ENCODE measurements at regions of chr17 and their contacts with region 1.

Region 1: GRCh38 chr17:39621523-39622379 is 5.0 kb upstream of the PPP1R1B start:
- DNase-seq: peak; percentile 92
- ATAC-seq: peak; percentile 78
- H3K4me3 Mint-ChIP-seq: peak overlapping the region; percentile 65
- H3K27ac Mint-ChIP-seq: peak overlapping the region; percentile 78
- H3K4me1 Mint-ChIP-seq: peaks cover 18% of the 10 kb centered on the region
- H3K27me3 Mint-ChIP-seq: peaks cover 14% of the 10 kb centered on the region
- CTCF ChIP-seq: peak; percentile 100

Region 2: DNA sequence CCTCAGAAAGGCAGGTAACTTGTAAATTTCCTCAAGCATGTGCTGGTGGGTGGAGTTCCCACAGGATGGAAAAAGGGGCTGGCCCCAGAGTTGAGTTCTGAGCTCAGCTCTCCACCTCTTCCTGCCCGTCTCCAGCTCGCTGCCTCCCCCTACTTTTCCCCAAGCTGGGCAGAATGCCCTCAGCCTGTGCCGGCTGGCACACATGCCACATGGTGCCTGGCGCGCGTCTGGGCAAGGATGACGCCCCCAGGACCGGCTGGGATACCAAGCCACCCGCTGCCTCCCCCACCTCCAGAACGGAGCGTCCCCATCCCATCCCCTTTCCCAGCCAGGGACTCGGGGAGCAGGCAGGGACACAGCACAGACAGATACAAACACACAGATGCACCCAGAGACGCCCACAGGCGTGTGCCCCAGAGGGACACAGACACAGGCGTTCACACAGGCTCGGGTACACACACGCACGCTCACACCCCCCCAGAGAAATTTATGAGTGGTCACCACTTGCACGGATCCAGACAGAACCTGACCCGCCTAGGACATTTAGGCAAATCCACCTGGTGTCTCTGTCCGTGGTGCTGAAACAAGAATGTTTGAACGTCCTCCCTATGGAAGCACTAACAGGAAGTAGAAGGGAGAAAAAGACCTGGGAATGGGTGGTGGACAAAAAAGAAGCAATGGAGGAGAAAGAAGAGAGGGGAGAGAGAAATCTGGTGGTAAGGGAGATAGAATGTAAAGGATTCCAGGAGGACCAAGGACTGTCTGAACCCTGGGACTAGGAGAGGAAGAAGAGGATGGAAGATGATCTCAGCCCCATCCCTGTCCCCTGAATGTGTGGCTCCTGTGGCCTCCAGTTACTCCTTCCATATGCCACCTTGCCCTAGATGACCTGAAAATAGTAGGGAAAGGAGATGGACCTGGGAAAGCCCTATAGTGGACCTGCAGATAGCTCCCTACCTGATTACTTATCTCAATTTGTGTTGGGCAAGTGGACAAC is 29.5 kb before region 1 on chr17:
- CTCF ChIA-PET with region 1: interaction called, 17 read pairs
- POLR2A ChIA-PET with region 1: interaction called, 3 read pairs
- intact Hi-C with region 1: no loop called
- DNase-seq: peak; percentile 52
- ATAC-seq: no peak
- H3K4me3 Mint-ChIP-seq: no peak overlapping the region
- H3K27ac Mint-ChIP-seq: no peak overlapping the region
- H3K4me1 Mint-ChIP-seq: peaks cover 10% of the 10 kb centered on the region
- H3K27me3 Mint-ChIP-seq: peaks cover 44% of the 10 kb centered on the region
- CTCF ChIP-seq: no peak

Region 3: DNA sequence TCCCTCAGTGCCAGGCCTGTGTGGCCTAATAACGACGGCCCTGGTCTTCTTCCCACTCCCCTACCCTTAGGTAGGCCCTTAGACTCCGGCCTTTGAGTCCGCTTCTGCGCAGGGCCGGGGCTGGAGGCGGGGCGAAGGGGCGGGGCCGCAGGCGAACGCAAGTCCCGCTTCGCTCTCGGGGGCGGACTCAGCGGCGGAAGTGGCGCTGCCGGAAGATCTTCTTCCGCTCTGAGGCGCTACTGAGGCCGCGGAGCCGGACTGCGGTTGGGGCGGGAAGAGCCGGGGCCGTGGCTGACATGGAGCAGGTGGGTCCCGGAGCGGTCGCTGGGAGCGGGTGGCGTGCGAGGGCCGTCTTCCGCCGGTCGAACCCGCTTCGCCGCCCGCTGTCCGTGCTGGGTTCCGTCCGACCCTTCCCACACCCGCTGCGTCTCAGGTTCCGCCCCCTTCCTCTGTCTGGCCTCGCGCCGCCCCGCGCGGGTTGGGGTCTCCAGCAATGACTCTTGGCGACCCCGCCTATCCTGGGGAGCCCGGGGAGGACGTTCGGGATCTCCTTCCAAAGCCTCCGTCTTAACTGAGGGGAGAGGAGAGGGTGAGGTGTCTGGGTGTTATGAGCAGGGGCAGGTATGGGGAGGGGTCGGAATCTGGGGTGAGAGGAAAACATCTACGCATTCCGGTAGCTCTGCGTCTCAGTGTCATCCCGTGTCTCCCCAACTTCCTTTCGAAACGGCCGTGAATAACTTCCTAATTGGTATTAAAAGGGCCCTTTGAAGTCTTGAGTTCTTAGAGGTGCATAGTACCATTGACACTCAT is 15.4 kb after region 1 on chr17 and contains the start of gene STARD3:
- CTCF ChIA-PET with region 1: interaction called, 224 read pairs
- POLR2A ChIA-PET with region 1: interaction called, 5 read pairs
- intact Hi-C with region 1: no loop called
- DNase-seq: peak; percentile 95
- ATAC-seq: peak; percentile 93
- H3K4me3 Mint-ChIP-seq: peak within 1 kb of the TSS; percentile 90
- H3K27ac Mint-ChIP-seq: peak within 1 kb of the TSS; percentile 87
- H3K4me1 Mint-ChIP-seq: peaks cover 46% of the 10 kb centered on the region
- H3K27me3 Mint-ChIP-seq: no peaks in the 10 kb centered on the region
- CTCF ChIP-seq: no peak
- total RNA-seq, gene STARD3: 48.7 to 50.3 TPM

Region 4: DNA sequence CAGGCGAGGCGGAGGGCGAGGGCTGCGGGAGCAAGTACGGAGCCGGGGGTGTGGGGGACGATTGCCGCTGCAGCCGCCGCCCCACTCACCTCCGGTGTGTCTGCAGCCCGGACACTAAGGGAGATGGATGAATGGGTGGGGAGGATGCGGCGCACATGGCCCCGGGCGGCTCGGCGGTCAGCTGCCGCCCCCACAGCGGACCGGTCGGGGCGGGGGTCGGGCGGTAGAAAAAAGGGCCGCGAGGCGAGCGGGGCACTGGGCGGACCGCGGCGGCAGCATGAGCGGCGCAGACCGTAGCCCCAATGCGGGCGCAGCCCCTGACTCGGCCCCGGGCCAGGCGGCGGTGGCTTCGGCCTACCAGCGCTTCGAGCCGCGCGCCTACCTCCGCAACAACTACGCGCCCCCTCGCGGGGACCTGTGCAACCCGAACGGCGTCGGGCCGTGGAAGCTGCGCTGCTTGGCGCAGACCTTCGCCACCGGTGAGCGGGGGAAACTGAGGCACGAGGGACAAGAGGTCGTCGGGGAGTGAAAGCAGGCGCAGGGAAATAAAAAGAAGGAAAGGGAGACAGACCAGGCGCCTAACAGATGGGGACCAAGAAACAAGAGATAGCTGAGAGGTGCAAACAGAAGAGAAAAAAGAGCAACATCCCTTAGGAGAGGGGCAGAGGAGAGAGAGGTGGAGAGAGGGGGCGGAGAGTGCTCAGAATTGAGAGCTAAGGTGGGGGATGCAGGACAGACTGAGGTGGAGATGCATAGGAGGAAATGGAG is 46.6 kb after region 1 on chr17 and contains the start of gene PNMT:
- CTCF ChIA-PET with region 1: interaction called, 132 read pairs
- POLR2A ChIA-PET with region 1: no interaction called
- intact Hi-C with region 1: no loop called
- DNase-seq: peak; percentile 82
- ATAC-seq: peak; percentile 83
- H3K4me3 Mint-ChIP-seq: peak within 1 kb of the TSS; percentile 60
- H3K27ac Mint-ChIP-seq: no peak within 1 kb of the TSS
- H3K4me1 Mint-ChIP-seq: peaks cover 10% of the 10 kb centered on the region
- H3K27me3 Mint-ChIP-seq: peaks cover 15% of the 10 kb centered on the region
- CTCF ChIP-seq: peak; percentile 76
- total RNA-seq, gene PNMT: 0.40 TPM in 1 of 2 experiments, not detected in the other

Region 5: GRCh38 chr17:39754161-39754951 is 132.6 kb after region 1 on chr17:
- CTCF ChIA-PET with region 1: interaction called, 75 read pairs
- POLR2A ChIA-PET with region 1: interaction called, 12 read pairs
- intact Hi-C with region 1: loop called (anchors 5 kb)
- DNase-seq: peak; percentile 97
- ATAC-seq: peak; percentile 81
- H3K4me3 Mint-ChIP-seq: peak overlapping the region; percentile 76
- H3K27ac Mint-ChIP-seq: peak overlapping the region; percentile 90
- H3K4me1 Mint-ChIP-seq: peaks cover 65% of the 10 kb centered on the region
- H3K27me3 Mint-ChIP-seq: no peaks in the 10 kb centered on the region
- CTCF ChIP-seq: peak; percentile 96

Region 6: GRCh38 chr17:40177275-40177874 is 555.6 kb after region 1 on chr17 and contains the start of gene RAPGEFL1:
- CTCF ChIA-PET with region 1: no interaction called
- POLR2A ChIA-PET with region 1: no interaction called
- intact Hi-C with region 1: no loop called
- DNase-seq: peak; percentile 94
- ATAC-seq: peak; percentile 98
- H3K4me3 Mint-ChIP-seq: peak within 1 kb of the TSS; percentile 49
- H3K27ac Mint-ChIP-seq: peak within 1 kb of the TSS; percentile 74
- H3K4me1 Mint-ChIP-seq: peaks cover 18% of the 10 kb centered on the region
- H3K27me3 Mint-ChIP-seq: no peaks in the 10 kb centered on the region
- CTCF ChIP-seq: no peak
- total RNA-seq, gene RAPGEFL1: 3.8 to 5.4 TPM